Left ventricle myocardium inferior (tissue), 1 donor: ENCODE measurements at regions of chr17 and their contacts with region 1.

Region 1: DNA sequence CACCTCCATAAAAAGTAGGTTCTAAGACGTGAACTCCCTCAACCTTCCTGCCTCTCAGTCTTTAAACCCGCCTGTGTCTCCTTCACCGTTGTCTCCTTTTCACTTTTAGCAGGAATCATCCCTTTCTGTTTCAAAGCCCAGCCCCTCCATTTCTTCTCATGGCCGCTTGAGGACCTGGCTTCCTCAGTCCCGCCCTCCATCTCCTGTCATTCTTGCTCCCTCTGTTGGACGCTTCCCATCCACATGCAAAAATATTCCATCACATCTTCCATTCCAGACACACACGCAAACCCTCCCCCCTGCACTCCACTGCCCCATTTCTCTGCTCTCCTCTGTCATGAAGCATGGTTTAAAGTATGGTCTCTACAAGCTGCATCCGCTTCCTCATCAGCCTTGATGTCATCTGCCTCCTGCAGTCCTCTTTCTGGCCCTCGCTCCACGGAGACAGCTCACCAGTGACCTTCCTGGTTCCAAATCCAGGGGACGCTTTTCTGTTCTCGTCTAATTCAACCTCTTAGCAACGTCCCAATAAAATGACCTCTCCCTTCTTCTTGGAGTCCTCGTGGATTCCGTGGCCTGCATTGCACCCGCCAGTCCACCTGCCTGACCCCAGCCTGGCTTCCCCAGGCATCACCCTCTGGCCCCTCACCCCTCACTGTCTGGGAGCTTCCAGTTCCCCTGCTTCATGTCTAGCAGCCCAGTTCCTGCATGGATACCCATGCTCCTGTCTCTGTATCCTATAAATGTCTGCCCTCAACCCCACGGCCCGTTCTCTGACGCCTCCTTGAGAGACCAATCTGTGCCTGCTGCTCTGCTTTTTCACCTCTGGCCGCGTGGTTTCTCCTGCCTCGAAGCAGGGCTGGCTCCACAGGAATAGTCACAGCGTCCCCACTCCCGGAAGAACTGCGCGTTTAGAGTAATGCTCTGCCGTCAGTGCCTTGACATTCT is 26.2 kb downstream of the ANKRD40 start:
- DNase-seq: no peak
- H3K4me3 ChIP-seq: no peak overlapping the region
- H3K27ac ChIP-seq: no peak overlapping the region
- H3K4me1 ChIP-seq: peaks cover 7% of the 10 kb centered on the region
- H3K27me3 ChIP-seq: no peaks in the 10 kb centered on the region
- CTCF ChIP-seq: peak; percentile 70

Region 2: GRCh38 chr17:50626037-50626574 is 55.4 kb before region 1 on chr17:
- intact Hi-C with region 1: loop called (anchors 5 kb)
- DNase-seq: peak; percentile 74
- H3K4me3 ChIP-seq: no peak overlapping the region
- H3K27ac ChIP-seq: no peak overlapping the region
- H3K4me1 ChIP-seq: peaks cover 7% of the 10 kb centered on the region
- H3K27me3 ChIP-seq: peaks cover 88% of the 10 kb centered on the region
- CTCF ChIP-seq: peak; percentile 85

Region 3: DNA sequence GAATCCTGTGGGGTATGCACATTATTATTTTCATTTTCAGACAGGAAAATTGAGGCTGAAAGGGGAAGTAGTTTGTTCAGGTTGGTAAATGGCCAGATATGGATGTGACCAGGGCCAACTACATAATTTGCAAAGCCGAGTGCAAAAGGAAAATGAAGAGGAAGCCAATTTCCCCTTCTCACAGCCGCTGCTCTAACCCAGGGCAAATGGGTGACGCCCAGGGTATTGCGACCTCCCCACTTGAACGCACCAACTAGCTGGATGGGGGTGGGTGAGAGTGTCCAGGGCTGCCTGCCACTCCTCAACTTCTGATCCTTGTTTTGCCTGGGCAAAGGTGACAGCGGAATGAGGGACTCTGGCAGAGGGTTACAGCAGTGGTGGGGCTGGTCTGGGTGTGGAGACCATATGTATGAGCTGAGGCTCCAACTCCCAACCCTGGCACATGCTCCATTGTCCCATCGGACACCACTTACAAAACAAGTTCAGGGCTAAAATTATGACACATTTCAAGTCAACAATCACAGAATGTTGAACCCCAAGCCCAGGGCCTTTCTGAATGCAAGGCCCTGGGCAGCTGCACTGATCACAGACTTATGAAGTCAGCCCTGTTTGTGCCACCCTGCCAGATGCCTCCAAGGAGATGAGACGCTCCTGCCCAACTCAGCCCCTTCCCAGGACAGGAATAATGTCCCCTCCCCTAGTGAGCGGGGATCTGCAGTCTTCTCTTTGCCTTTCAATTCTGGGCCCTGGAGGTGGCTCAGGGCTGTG is 84.1 kb after region 1 on chr17:
- intact Hi-C with region 1: no loop called
- DNase-seq: no peak
- H3K4me3 ChIP-seq: no peak overlapping the region
- H3K27ac ChIP-seq: no peak overlapping the region
- H3K4me1 ChIP-seq: peaks cover 29% of the 10 kb centered on the region
- H3K27me3 ChIP-seq: no peaks in the 10 kb centered on the region
- CTCF ChIP-seq: no peak

Region 4: GRCh38 chr17:50944054-50944901 is 262.7 kb after region 1 on chr17:
- intact Hi-C with region 1: no loop called
- DNase-seq: peak; percentile 86
- H3K4me3 ChIP-seq: peak overlapping the region; percentile 73
- H3K27ac ChIP-seq: peak overlapping the region; percentile 98
- H3K4me1 ChIP-seq: peaks cover 46% of the 10 kb centered on the region
- H3K27me3 ChIP-seq: no peaks in the 10 kb centered on the region
- CTCF ChIP-seq: peak; percentile 21